Gastrocnemius medialis (tissue), 4 donors: ENCODE measurements at regions of chr22 and their contacts with region 1.

Region 1: DNA sequence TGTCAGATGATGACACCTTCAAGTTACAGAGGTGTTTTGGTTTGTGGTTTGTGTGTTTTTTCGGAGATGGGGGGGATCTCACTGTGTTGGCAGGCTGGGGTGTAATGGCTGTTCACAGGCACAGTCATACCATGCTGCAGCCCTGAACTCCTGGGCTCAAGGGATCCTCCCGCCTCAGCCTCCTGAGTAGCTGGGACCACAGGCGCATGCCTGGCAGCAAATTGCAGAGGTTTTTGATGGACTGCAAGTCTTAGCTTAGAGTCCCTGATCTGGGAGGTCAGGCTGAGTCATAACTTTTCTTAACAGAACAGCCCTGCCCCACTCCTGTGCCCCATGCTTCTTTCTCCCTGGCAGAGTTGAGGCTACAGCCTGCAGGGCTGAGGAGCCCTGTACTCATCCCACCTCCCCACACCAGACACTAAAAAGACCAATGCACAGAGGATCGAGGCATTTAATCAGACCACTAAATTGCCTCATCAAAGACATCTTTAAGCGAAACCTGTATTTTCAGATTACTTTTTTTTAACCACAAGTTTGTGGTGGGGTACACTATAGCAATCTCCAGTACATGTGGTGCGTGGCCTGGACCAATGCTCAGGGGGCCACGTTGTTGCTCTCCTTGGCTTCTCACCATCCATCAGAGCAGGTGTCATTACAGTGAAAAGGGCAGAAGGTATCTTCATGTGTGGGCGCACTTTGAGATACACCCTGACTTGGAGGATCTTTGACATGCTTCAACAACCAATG is 17.1 kb upstream of the ADORA2A start:
- DNase-seq: no peak
- ATAC-seq: no peak
- H3K4me3 ChIP-seq: no peak overlapping the region
- H3K27ac ChIP-seq: no peak overlapping the region
- H3K4me1 ChIP-seq: peaks cover 9 to 19% of the 10 kb centered on the region in 2 donors
- H3K27me3 ChIP-seq: no peaks in the 10 kb centered on the region
- CTCF ChIP-seq: no peak
- POLR2A ChIP-seq: no peak

Region 2: GRCh38 chr22:24423519-24424000 is 13.3 kb after region 1 on chr22:
- in situ Hi-C with region 1: no loop called
- intact Hi-C with region 1: no loop called
- DNase-seq: no peak
- ATAC-seq: peak; percentile 60 to 68
- H3K4me3 ChIP-seq: peak overlapping the region; percentile 52 to 71 (median 59)
- H3K27ac ChIP-seq: peak overlapping the region in 3 of 4 donors; percentile 40 to 50 (median 41)
- H3K4me1 ChIP-seq: peaks cover 11 to 13% of the 10 kb centered on the region in 2 donors
- H3K27me3 ChIP-seq: peaks cover 4 to 10% (median 6%) of the 10 kb centered on the region in 3 donors
- CTCF ChIP-seq: peak; percentile 69 to 98 (median 92)
- POLR2A ChIP-seq: no peak

Region 3: GRCh38 chr22:24494528-24495364 is 84.5 kb after region 1 on chr22 and contains the start of gene UPB1:
- in situ Hi-C with region 1: loop called in 1 of 4 experiments (anchors 10 kb)
- intact Hi-C with region 1: no loop called
- DNase-seq: no peak
- ATAC-seq: no peak
- H3K4me3 ChIP-seq: peak within 1 kb of the TSS; percentile 12 to 47 (median 34)
- H3K27ac ChIP-seq: no peak within 1 kb of the TSS
- H3K4me1 ChIP-seq: peaks cover 0 to 6% of the 10 kb centered on the region in 2 donors
- H3K27me3 ChIP-seq: peaks cover 12 to 25% (median 21%) of the 10 kb centered on the region in 3 donors
- CTCF ChIP-seq: no peak
- POLR2A ChIP-seq: no peak
- total RNA-seq, gene UPB1: 0.20 to 0.25 (median 0.22) TPM